ENCODE measurements at regions of chr3 and their contacts with region 1.

Region 1: GRCh38 chr3:149657926-149658733 is at the start of gene WWTR1:
- DNase-seq: peak; percentile 54
- ATAC-seq: peak; percentile 85
- H3K4me3 ChIP-seq: peak within 1 kb of the TSS; percentile 87
- H3K27ac ChIP-seq: peak within 1 kb of the TSS; percentile 97
- H3K4me1 ChIP-seq: peaks cover 10% of the 10 kb centered on the region
- H3K27me3 ChIP-seq: no peaks in the 10 kb centered on the region
- CTCF ChIP-seq: peak; percentile 23 to 52 (median 43); a peak in 5 of 6 replicates
- EP300 ChIP-seq: 0 out of 4 replicates have a peak, but pooled peaks of 1 of the 2 experiments have one; percentile 18
- POLR2A ChIP-seq: peak; percentile 77
- RAD21 ChIP-seq: peak; percentile 54
- polyA plus RNA-seq, gene WWTR1: 3.8 to 4.0 TPM

Region 2: GRCh38 chr3:149536429-149536828 is 121.7 kb before region 1 on chr3:
- CTCF ChIA-PET with region 1: interaction called, 30 read pairs
- POLR2A ChIA-PET with region 1: interaction called, 5 read pairs
- RAD21 ChIA-PET with region 1: interaction called, 21 read pairs
- SMC1A ChIA-PET with region 1: interaction called, 21 read pairs
- in situ Hi-C with region 1: no loop called
- intact Hi-C with region 1: loop called (anchors 2 kb)
- DNase-seq: no peak
- ATAC-seq: no peak
- H3K4me3 ChIP-seq: no peak overlapping the region
- H3K27ac ChIP-seq: no peak overlapping the region
- H3K4me1 ChIP-seq: peaks cover 12% of the 10 kb centered on the region
- H3K27me3 ChIP-seq: no peaks in the 10 kb centered on the region
- CTCF ChIP-seq: no peak
- EP300 ChIP-seq: no peak
- POLR2A ChIP-seq: no peak
- RAD21 ChIP-seq: no peak

Region 3: GRCh38 chr3:149581681-149582370 is 76.3 kb before region 1 on chr3:
- CTCF ChIA-PET with region 1: interaction called, 36 read pairs
- POLR2A ChIA-PET with region 1: interaction called, 42 read pairs
- RAD21 ChIA-PET with region 1: interaction called, 107 read pairs
- SMC1A ChIA-PET with region 1: interaction called, 49 read pairs
- in situ Hi-C with region 1: no loop called
- intact Hi-C with region 1: loop called (anchors 1 kb)
- DNase-seq: no peak
- ATAC-seq: peak; percentile 57
- H3K4me3 ChIP-seq: peak overlapping the region; percentile 52; the same call in 1 of the 2 replicates
- H3K27ac ChIP-seq: peak overlapping the region; percentile 63
- H3K4me1 ChIP-seq: peaks cover 73% of the 10 kb centered on the region
- H3K27me3 ChIP-seq: no peaks in the 10 kb centered on the region
- CTCF ChIP-seq: no peak
- EP300 ChIP-seq: 0 out of 4 replicates have a peak, but pooled peaks of 1 of the 2 experiments have one; percentile 21
- POLR2A ChIP-seq: no peak
- RAD21 ChIP-seq: no peak

Region 4: GRCh38 chr3:149609595-149609994 is 48.5 kb before region 1 on chr3:
- CTCF ChIA-PET with region 1: interaction called, 20 read pairs
- POLR2A ChIA-PET with region 1: interaction called, 26 read pairs
- RAD21 ChIA-PET with region 1: interaction called, 84 read pairs
- SMC1A ChIA-PET with region 1: interaction called, 79 read pairs
- in situ Hi-C with region 1: no loop called
- intact Hi-C with region 1: no loop called
- DNase-seq: peak; percentile 81
- ATAC-seq: peak; percentile 97
- H3K4me3 ChIP-seq: no peak overlapping the region
- H3K27ac ChIP-seq: no peak overlapping the region
- H3K4me1 ChIP-seq: peaks cover 16% of the 10 kb centered on the region
- H3K27me3 ChIP-seq: no peaks in the 10 kb centered on the region
- CTCF ChIP-seq: no peak
- EP300 ChIP-seq: peak; percentile 62
- POLR2A ChIP-seq: no peak
- RAD21 ChIP-seq: no peak

Region 5: DNA sequence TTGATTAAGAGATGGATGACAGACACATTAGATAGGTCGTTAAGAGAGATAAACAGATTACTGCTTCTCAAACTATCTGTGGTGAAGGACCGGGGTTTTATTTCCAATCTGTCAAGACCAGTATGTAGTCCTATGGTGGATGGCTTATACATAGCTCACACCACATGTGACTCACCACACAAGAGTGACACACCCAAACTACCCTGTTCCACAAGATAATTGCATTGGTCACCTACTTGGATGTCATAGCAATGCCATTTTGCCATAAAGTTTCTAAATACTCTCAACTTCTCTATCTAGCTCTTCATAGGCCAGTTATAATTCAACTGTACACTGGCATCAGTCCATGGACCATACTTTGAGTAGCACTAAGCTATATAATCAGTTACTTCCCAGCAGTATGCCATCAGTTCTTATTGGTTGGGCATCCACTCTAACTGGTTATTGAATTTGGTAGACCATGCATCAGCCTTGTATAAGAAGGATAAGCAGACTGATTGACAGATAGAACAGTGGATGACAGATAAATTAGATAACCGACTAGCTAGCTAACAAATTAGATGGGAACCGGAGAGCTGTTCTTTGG is 11.9 kb before region 1 on chr3:
- CTCF ChIA-PET with region 1: interaction called, 6 read pairs
- POLR2A ChIA-PET with region 1: interaction called, 16 read pairs
- RAD21 ChIA-PET with region 1: interaction called, 21 read pairs
- SMC1A ChIA-PET with region 1: interaction called, 33 read pairs
- in situ Hi-C with region 1: no loop called
- intact Hi-C with region 1: no loop called
- DNase-seq: no peak
- ATAC-seq: peak; percentile 51
- H3K4me3 ChIP-seq: no peak overlapping the region
- H3K27ac ChIP-seq: no peak overlapping the region
- H3K4me1 ChIP-seq: peaks cover 14% of the 10 kb centered on the region
- H3K27me3 ChIP-seq: no peaks in the 10 kb centered on the region
- CTCF ChIP-seq: no peak
- EP300 ChIP-seq: no peak
- POLR2A ChIP-seq: no peak
- RAD21 ChIP-seq: no peak

Region 6: GRCh38 chr3:149702691-149703441 is 44.7 kb after region 1 on chr3:
- CTCF ChIA-PET with region 1: interaction called, 11 read pairs
- POLR2A ChIA-PET with region 1: no interaction called
- RAD21 ChIA-PET with region 1: interaction called, 7 read pairs
- SMC1A ChIA-PET with region 1: interaction called, 7 read pairs
- in situ Hi-C with region 1: no loop called
- intact Hi-C with region 1: loop called (anchors 5 kb)
- DNase-seq: no peak
- ATAC-seq: peak; percentile 64
- H3K4me3 ChIP-seq: no peak overlapping the region
- H3K27ac ChIP-seq: no peak overlapping the region
- H3K4me1 ChIP-seq: no peaks in the 10 kb centered on the region
- H3K27me3 ChIP-seq: no peaks in the 10 kb centered on the region
- CTCF ChIP-seq: no peak
- EP300 ChIP-seq: no peak
- POLR2A ChIP-seq: no peak
- RAD21 ChIP-seq: no peak